Thyroid gland (tissue), 4 donors: ENCODE measurements at regions of chr4 and their contacts with region 1.

Region 1: DNA sequence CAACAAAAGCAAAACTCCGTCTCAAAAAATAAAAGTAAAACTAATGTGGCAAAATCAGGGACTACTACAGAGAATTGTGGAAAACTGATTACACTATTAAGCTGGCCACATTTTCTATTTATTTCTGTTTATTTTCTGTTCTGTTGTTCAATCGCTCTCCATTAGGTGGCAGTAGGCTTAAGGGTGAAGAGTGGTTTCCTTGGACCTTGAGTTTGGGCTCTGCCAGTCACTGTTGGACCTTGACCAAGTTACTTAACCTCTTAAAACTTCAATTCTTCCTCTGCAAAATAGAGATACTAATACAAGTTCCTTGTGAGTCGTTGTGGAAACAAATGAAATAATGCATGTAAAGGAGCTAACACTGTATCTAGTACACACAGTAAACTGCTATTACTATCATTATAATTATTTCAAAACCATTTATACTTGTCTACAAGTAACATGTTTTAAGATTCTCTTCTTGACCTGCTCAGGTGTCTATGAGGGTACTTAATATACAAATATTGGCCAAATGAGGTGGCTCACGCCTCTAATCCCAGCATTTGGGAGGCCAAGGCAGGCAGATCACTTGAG is 15.2 kb downstream of the HSD17B11 start:
- DNase-seq: peak; percentile 40 to 47
- H3K4me3 ChIP-seq: no peak overlapping the region
- H3K27ac ChIP-seq: no peak overlapping the region
- H3K4me1 ChIP-seq: peaks cover 0 to 4% of the 10 kb centered on the region in 2 donors
- H3K27me3 ChIP-seq: no peaks in the 10 kb centered on the region
- CTCF ChIP-seq: peak; percentile 31 to 85 (median 70)
- POLR2A ChIP-seq: no peak

Region 2: GRCh38 chr4:87465739-87466366 is 90.0 kb after region 1 on chr4:
- intact Hi-C with region 1: loop called (anchors 5 kb)
- DNase-seq: peak in 1 of 2 donors; percentile 3
- H3K4me3 ChIP-seq: no peak overlapping the region
- H3K27ac ChIP-seq: no peak overlapping the region
- H3K4me1 ChIP-seq: no peaks in the 10 kb centered on the region
- H3K27me3 ChIP-seq: no peaks in the 10 kb centered on the region
- CTCF ChIP-seq: peak; percentile 17 to 78 (median 50)
- POLR2A ChIP-seq: no peak

Region 3: DNA sequence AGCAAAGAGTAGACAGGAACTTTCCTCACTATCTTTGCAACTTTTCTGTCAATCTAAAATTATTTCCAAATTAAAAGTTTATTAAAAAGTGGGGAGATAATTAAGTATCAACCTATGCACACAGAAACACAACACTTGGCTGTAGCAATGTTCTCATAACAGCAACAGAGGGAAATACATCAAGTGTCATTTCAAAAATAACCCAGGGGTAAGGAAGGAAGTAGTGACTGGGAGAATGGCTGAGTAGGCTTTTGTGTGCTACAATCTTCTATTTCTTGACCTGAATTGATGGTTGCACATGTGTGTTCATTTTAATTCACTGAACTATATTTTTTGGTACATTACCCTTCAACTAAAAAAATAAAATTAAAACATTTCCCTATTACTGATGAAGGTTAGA is 715.1 kb after region 1 on chr4:
- intact Hi-C with region 1: no loop called
- DNase-seq: no peak
- H3K4me3 ChIP-seq: no peak overlapping the region
- H3K27ac ChIP-seq: no peak overlapping the region
- H3K4me1 ChIP-seq: no peaks in the 10 kb centered on the region
- H3K27me3 ChIP-seq: no peaks in the 10 kb centered on the region
- CTCF ChIP-seq: no peak
- POLR2A ChIP-seq: no peak